Naive thymus-derived CD4-positive, alpha-beta T cell (primary cell): ENCODE measurements at regions of chr3 and their contacts with region 1.

Region 1: GRCh38 chr3:185937689-185938463 is at the start of gene TRA2B:
- DNase-seq: peak; percentile 93 to 99 (median 99)
- ATAC-seq: peak; percentile 94
- H3K4me3 ChIP-seq: peak within 1 kb of the TSS; percentile 99
- H3K4me3 Mint-ChIP-seq: peak within 1 kb of the TSS; percentile 91 to 100 (median 100)
- H3K27ac ChIP-seq: peak within 1 kb of the TSS; percentile 95
- H3K27ac Mint-ChIP-seq: peak within 1 kb of the TSS; percentile 99 to 100 (median 100)
- H3K4me1 ChIP-seq: peaks cover 16 to 20% of the 10 kb centered on the region in 2 donors
- H3K4me1 Mint-ChIP-seq: peaks cover 27 to 52% (median 41%) of the 10 kb centered on the region in 7 donors
- H3K27me3 ChIP-seq: no peaks in the 10 kb centered on the region
- H3K27me3 Mint-ChIP-seq: peaks cover 0 to 16% (median 0%) of the 10 kb centered on the region in 5 donors
- total RNA-seq, gene TRA2B: 194 to 673 (median 216) TPM

Region 2: DNA sequence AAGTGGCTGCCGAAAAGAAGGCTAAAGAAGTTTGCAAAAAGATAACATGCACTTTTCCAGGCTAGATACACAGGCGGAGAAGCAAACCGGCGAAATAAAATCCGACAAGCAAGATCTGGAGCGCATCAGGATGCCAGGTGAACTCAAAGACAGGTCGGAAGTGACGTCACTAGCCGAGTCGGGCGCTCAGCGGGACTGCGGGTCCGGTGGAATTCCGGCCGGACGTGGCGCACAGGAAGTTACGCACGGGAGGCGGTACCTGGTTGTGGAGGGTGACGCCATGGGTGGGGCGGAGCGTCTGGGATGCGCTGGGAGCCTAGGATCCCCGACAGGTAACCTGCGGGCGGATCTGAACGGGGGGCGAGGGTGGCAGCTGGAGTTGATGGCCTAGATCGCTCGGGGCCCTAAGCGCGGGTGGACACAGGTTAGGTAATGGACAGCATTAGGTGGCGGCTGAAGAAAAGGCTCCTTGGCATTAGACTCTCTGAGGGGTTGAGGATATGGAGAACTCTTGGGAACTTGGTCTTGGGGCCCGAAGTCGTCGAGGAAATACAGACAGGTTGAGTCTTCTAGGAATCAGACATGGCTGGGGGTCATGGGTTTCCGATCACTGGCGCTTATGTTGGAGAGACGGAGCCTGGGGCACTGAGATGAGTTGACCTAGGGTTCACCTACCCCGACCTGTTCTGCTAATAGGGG is 655.0 kb before region 1 on chr3:
- CTCF ChIA-PET with region 1: no interaction called
- POLR2A ChIA-PET with region 1: no interaction called
- intact Hi-C with region 1: loop called in 1 of 2 experiments (anchors 2 kb)
- DNase-seq: peak; percentile 80 to 95 (median 89)
- ATAC-seq: peak; percentile 99
- H3K4me3 ChIP-seq: peak overlapping the region; percentile 91
- H3K4me3 Mint-ChIP-seq: peak overlapping the region; percentile 89 to 100 (median 94)
- H3K27ac ChIP-seq: peak overlapping the region; percentile 59
- H3K27ac Mint-ChIP-seq: peak overlapping the region; percentile 77 to 98 (median 93)
- H3K4me1 ChIP-seq: peaks cover 5 to 12% of the 10 kb centered on the region in 2 donors
- H3K4me1 Mint-ChIP-seq: peaks cover 15 to 33% (median 19%) of the 10 kb centered on the region in 7 donors
- H3K27me3 ChIP-seq: no peaks in the 10 kb centered on the region
- H3K27me3 Mint-ChIP-seq: peaks cover 9 to 25% (median 21%) of the 10 kb centered on the region in 5 donors

Region 3: DNA sequence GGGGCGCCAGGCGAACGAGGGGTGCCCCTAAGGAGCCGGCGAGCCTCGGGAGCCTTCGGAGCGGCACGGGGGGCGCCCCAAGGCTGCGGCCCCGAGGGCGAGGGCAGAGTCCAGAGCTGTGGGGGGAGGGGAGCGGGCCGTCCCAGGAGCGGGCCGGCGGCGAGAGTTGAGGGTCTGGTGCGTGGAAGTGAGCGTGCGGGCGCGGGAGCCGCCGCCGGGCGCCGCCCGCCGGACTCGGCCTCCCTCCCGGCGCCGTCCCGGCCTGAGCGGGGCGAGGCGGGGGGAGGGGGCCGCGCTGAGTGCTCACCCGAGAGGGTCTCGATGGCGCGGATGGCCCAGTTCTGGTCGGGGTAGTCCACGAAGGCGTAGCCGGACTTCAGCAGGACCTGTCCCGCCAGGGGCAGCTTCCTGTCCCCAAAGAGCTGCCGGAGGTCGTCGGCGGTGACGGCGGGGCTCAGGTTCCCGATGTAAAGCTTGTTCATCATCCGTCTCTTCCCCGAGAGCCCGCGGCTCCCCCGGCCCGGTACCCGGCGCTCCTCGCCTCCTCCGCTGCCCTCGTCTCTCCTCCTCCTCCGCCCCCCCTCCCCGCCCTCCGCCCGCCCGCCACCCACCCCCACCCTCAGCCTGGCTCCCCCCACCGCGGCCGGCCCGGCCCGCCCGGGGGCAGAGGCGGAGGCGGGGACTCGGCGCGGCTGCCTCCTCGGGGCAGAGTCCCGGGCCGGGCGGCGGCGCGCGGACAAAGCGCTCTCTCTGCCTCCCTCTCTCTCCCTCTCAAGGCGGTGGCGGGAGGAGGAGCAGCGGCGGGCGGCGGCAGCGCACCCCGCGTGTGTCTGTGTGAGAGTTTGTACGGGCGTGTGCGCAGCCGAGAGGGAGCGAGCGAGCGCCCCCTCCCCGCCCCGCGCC is 113.1 kb before region 1 on chr3 and contains the start of gene IGF2BP2:
- CTCF ChIA-PET with region 1: no interaction called
- POLR2A ChIA-PET with region 1: no interaction called
- intact Hi-C with region 1: loop called (anchors 5 to 10 kb)
- DNase-seq: peak in 8 of 9 donors; percentile 11 to 65 (median 32)
- ATAC-seq: peak; percentile 81
- H3K4me3 ChIP-seq: peak within 1 kb of the TSS; percentile 41
- H3K4me3 Mint-ChIP-seq: peak within 1 kb of the TSS; percentile 71 to 93 (median 84)
- H3K27ac ChIP-seq: no peak within 1 kb of the TSS
- H3K27ac Mint-ChIP-seq: peak within 1 kb of the TSS in 1 of 9 donors; percentile 79
- H3K4me1 ChIP-seq: no peaks in the 10 kb centered on the region
- H3K4me1 Mint-ChIP-seq: peaks cover 5 to 23% (median 16%) of the 10 kb centered on the region in 7 donors
- H3K27me3 ChIP-seq: peaks cover 5 to 8% of the 10 kb centered on the region in 2 donors
- H3K27me3 Mint-ChIP-seq: peaks cover 58 to 83% (median 60%) of the 10 kb centered on the region in 5 donors
- total RNA-seq, gene IGF2BP2: 0.14 to 5.0 (median 0.87) TPM in 4 of 5 experiments, not detected in the other

Region 4: DNA sequence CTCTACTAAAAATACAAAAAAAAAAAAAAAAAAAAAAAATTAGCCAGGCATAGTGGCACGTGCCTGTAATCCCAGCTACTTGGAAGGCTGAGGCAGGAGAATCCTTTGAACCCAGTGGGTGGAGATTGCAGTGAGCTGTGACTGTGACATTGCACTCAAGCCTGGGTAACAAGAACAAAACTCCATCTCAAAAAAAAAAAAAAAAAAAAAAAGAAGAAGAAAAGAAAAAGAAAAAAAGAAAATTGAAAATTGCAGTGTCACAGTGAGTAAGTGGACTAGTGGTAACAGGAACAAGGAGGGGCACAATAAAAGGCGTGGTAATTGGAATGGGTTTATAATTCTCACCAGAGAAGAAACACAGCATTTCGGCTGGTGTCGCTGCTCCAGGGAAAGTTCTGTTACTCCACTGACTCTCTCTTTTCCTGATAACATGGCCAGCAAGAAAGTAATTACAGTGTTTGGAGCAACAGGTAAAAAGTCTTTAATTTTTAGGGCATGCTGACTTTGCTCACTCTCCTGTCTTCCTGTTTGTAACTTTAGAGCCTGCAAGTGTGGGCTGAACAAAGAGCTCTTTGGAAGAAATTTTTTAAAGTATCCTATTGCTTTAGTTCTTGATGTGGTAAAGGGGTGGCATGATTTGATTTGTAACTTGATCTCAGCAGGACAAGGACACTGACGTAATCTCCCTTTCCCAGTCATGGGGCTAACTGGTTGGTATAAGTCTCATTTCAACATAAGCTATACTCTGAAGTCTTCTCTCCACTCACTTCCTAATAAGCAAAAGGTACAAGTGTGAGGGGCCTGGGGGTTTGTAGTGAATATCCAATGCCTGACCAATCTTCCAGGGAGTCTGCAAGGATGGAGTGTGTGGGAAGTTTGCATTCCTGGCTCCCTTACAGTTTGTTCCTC is 22.0 kb after region 1 on chr3:
- CTCF ChIA-PET with region 1: interaction called, 17 read pairs
- POLR2A ChIA-PET with region 1: interaction called, 17 read pairs
- intact Hi-C with region 1: loop called in 1 of 2 experiments (anchors 2 kb)
- DNase-seq: peak in 6 of 9 donors; percentile 26 to 53 (median 36)
- ATAC-seq: peak; percentile 73
- H3K4me3 ChIP-seq: no peak overlapping the region
- H3K4me3 Mint-ChIP-seq: peak overlapping the region in 6 of 10 donors; percentile 45 to 70 (median 54)
- H3K27ac ChIP-seq: no peak overlapping the region
- H3K27ac Mint-ChIP-seq: peak overlapping the region in 3 of 9 donors; percentile 4 to 90 (median 62)
- H3K4me1 ChIP-seq: peaks cover 0 to 8% of the 10 kb centered on the region in 2 donors
- H3K4me1 Mint-ChIP-seq: peaks cover 0 to 10% (median 8%) of the 10 kb centered on the region in 7 donors
- H3K27me3 ChIP-seq: no peaks in the 10 kb centered on the region
- H3K27me3 Mint-ChIP-seq: peaks cover 0 to 12% (median 4%) of the 10 kb centered on the region in 5 donors

Region 5: DNA sequence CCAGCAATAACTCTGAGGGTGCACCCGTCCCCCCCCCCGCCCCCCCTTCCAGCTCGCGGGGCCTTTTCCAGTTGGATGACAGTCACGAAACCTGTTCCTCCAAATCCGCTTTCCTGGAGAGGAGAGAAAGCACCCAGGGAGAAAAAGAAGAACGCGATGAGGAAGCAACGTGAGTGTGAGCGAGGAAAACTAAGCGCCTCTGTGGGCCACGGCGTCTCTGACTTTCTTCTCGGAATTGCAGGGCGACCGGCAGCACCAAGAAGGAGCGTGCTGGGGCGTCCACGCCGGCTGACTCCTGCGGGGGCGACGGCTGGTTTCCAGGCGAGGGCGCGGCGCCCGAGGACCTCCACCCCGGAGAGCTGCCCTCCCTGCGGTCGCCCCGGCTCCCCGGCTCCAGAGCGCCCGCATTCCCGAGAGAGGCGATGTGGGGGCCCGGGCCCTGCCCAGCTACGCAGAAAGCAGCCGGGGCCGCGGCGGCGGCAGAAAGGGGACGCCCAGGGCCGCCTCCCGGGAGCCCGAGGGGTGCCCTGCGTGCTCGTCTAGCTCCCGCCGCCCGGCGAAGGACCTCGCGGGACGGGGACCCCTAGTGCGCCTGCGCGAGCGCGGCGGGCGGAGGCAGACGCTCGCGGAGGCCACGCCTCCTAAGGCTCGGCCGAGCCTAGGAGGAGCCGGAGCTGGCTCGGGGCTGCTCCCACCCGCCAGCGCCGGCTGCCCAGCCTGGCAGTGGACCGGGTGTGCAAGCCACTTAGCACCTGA is 889.3 kb after region 1 on chr3:
- CTCF ChIA-PET with region 1: no interaction called
- POLR2A ChIA-PET with region 1: interaction called, 3 read pairs
- intact Hi-C with region 1: loop called (anchors 2 to 5 kb)
- DNase-seq: peak; percentile 79 to 92 (median 87)
- ATAC-seq: peak; percentile 96
- H3K4me3 ChIP-seq: peak overlapping the region; percentile 66
- H3K4me3 Mint-ChIP-seq: peak overlapping the region; percentile 53 to 91 (median 80)
- H3K27ac ChIP-seq: peak overlapping the region; percentile 52
- H3K27ac Mint-ChIP-seq: peak overlapping the region in 2 of 9 donors; percentile 18 to 19
- H3K4me1 ChIP-seq: peaks cover 6 to 21% of the 10 kb centered on the region in 2 donors
- H3K4me1 Mint-ChIP-seq: peaks cover 15 to 24% (median 20%) of the 10 kb centered on the region in 7 donors
- H3K27me3 ChIP-seq: peaks cover 0 to 22% of the 10 kb centered on the region in 2 donors
- H3K27me3 Mint-ChIP-seq: peaks cover 45 to 61% (median 52%) of the 10 kb centered on the region in 5 donors

Region 6: DNA sequence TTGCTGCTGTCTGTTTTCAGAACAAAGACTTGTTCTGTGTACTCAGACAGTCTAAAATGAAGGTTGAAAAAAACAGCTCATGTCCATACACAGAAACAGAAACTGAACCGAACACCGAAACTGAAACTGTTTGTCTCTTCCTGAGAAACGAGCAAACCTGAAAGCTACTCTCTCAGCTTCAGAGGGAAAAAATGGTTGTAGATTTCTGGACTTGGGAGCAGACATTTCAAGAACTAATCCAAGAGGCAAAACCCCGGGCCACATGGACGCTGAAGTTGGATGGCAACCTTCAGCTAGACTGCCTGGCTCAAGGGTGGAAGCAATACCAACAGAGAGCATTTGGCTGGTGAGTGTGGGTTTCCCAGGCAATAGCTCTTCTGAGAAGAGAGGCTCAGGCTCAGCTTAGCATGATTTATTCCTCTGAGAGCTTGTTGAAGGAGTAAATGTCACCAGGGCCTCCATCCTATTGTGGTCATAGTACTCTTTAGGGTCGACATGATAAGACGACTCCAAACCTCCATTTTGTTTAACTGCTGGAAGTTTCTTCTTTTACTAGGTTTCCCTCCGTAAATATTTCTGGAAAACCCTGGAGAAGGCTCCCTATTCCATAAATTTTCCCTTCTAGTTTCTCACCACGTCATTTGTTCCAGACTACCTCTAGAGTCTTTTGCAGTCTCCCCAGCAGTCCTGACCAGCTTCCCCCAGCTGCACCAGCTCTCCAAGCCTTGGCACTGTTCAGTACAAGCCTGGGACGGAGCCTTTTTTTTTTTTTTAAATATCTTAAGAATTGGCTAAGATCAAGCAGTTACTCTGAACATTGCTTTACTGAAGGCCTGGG is 1430.6 kb after region 1 on chr3 and contains the start of gene RTP4:
- CTCF ChIA-PET with region 1: no interaction called
- POLR2A ChIA-PET with region 1: no interaction called
- intact Hi-C with region 1: loop called in 1 of 2 experiments (anchors 5 kb)
- DNase-seq: peak in 8 of 9 donors; percentile 25 to 70 (median 55)
- ATAC-seq: peak; percentile 86
- H3K4me3 ChIP-seq: peak within 1 kb of the TSS; percentile 85
- H3K4me3 Mint-ChIP-seq: peak within 1 kb of the TSS; percentile 89 to 100 (median 98)
- H3K27ac ChIP-seq: peak within 1 kb of the TSS; percentile 78
- H3K27ac Mint-ChIP-seq: peak within 1 kb of the TSS; percentile 94 to 100 (median 98)
- H3K4me1 ChIP-seq: peaks cover 9 to 13% of the 10 kb centered on the region in 2 donors
- H3K4me1 Mint-ChIP-seq: peaks cover 22 to 42% (median 29%) of the 10 kb centered on the region in 7 donors
- H3K27me3 ChIP-seq: no peaks in the 10 kb centered on the region
- H3K27me3 Mint-ChIP-seq: no peaks in the 10 kb centered on the region
- total RNA-seq, gene RTP4: 1.6 to 23.1 (median 5.5) TPM